Vagina (tissue), 2 donors: ENCODE measurements at regions of chr10 and their contacts with region 1.

Region 1: GRCh38 chr10:95559471-95559870 is 1.7 kb downstream of the SORBS1 start:
- DNase-seq: no peak
- H3K4me3 ChIP-seq: peak overlapping the region; percentile 59 to 91
- H3K27ac ChIP-seq: peak overlapping the region; percentile 78
- H3K4me1 ChIP-seq: peaks cover 25% of the 10 kb centered on the region
- H3K27me3 ChIP-seq: no peaks in the 10 kb centered on the region
- CTCF ChIP-seq: no peak
- POLR2A ChIP-seq: no peak

Region 2: DNA sequence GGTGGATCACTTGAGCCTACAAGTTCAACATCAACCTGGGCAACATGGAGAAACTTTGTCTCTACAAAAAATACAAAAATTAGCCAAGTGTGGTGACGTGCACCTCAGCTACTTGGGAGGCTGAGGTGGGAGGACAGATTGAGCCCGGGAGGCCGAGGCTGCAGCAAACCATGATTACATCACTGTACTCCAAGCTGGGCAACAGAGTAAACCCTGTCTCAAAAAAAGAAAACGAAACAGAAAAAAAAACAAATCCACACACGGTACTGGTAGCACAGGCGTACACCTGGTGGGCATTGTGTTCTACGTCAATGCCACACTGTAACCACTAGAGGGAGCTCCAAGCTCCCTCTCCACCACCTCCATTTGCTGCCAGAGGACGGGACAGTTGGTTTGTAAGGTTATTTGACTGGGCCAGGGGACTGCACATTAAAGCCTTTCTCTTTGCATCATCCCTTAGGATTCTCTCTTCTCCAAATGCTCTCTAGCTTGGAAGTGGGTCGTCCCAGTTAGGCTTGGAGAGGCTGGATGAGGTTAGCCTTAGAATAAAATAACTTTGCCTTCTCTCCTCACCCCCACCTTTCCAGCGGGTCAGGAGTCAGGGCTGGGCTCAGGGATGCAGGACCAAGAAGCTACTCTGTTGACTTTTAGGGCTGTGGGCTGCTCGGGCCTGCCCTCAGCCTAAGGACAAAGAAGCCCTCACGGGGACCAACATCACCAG is 129.1 kb before region 1 on chr10:
- intact Hi-C with region 1: loop called (anchors 5 kb)
- DNase-seq: no peak
- H3K4me3 ChIP-seq: no peak overlapping the region
- H3K27ac ChIP-seq: peak overlapping the region; percentile 60
- H3K4me1 ChIP-seq: peaks cover 16% of the 10 kb centered on the region
- H3K27me3 ChIP-seq: no peaks in the 10 kb centered on the region
- CTCF ChIP-seq: peak; percentile 85 to 93 (median 88)
- POLR2A ChIP-seq: no peak

Region 3: DNA sequence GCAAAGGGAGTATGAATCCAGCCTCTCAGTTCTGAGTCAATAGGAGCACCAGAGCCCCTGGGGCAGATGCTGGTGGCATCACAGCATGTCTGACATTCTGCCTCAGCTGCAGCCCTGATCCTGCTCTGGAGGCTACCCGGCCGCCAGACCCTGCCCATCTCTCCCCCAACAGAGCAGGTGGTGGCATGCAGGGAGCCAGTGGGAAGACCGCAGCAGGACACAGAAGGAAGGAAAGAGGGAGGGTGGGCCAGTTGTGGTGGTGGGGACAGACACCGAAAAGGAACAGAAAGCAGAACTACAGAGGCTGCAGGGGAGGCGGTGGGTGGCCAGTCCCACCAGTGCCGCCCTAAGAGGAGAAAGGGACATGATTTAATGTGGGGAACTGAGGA is 676.6 kb after region 1 on chr10:
- intact Hi-C with region 1: no loop called
- DNase-seq: no peak
- H3K4me3 ChIP-seq: no peak overlapping the region
- H3K27ac ChIP-seq: no peak overlapping the region
- H3K4me1 ChIP-seq: no peaks in the 10 kb centered on the region
- H3K27me3 ChIP-seq: no peaks in the 10 kb centered on the region
- CTCF ChIP-seq: no peak
- POLR2A ChIP-seq: no peak